ENCODE measurements at regions of chr21 and their contacts with region 1.

Region 1: GRCh38 chr21:44297525-44298290 is 2.1 kb upstream of the PFKL start:
- DNase-seq: peak; percentile 90
- CTCF ChIP-seq: peak; percentile 84

Region 2: DNA sequence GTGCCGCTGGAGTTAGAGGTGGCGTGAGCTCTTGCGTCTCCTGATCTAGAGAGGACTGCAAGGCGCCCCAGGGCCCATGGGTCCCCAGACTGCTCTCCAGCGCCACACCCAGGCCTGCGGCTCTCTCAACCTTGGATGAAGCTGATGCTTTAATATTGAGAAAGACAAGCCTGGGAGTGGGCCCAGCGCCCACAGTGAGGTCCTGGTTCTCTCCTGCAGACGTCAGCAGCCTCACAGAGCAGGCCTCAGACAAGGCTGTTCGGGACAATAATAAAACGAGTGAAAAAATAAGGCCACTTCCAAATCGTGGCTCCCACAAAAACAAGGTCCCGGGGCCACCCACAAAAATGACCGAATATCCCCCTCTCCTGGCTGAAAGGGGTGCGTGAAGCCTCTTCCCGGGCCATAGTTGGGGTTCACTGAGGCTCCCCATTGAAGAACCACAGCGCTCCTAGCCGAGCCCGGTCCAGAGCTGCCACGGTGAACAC is 30.0 kb before region 1 on chr21:
- CTCF ChIA-PET with region 1: interaction called, 19 read pairs
- POLR2A ChIA-PET with region 1: no interaction called
- DNase-seq: no peak
- CTCF ChIP-seq: peak; percentile 35

Region 3: DNA sequence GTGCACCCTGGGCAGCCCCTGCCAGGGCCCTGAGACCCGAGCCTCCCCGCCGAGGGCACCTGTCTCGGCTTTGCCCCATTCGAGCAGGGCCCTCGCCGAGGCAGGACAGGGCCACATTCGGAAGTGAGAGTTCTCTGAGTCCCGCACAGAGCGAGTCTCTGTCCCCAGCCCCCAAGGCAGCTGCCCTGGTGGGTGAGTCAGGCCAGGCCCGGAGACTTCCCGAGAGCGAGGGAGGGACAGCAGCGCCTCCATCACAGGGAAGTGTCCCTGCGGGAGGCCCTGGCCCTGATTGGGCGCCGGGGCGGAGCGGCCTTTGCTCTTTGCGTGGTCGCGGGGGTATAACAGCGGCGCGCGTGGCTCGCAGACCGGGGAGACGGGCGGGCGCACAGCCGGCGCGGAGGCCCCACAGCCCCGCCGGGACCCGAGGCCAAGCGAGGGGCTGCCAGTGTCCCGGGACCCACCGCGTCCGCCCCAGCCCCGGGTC is 12.2 kb before region 1 on chr21 and contains the start of gene AIRE:
- CTCF ChIA-PET with region 1: interaction called, 18 read pairs
- POLR2A ChIA-PET with region 1: no interaction called
- DNase-seq: no peak
- CTCF ChIP-seq: no peak

Region 4: DNA sequence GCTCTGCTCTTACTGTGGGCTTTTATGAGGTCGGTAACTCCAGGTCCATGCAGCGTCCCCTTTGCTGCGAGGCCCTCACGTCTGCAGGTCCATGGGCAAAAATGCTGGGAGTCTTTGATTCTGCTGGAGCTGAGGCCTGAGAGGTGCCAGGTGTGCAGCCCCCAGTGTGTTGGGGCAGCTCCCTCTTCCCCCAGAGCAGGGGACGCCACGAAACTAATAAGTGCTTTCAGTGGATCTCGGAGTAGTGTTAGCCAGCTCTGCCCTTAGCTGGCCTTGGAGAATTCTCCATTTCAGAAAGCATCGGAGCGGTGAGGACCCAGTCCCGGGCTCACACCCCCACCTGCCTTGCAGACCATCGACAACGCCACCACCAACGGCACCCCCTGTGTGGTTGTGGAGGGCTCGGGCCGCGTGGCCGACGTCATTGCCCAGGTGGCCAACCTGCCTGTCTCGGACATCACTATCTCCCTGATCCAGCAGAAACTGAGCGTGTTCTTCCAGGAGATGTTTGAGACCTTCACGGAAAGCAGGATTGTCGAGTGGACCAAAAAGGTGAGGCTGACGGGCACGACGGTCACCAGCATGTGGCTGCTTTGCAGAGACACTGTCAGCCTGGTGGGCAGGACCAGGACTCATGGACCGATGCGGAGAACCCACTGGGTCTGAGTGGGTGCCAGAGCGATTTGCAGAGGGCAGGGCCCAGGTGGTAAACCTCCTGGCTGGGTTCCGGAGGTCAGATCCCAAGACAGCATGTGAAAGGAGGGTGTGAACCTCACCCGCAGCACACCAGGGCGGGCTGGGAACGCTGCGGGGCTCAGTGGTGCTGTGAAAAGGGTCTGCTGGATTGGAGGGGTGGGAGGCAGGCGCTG is 81.2 kb after region 1 on chr21:
- CTCF ChIA-PET with region 1: no interaction called
- POLR2A ChIA-PET with region 1: no interaction called
- DNase-seq: no peak
- CTCF ChIP-seq: no peak

Region 5: DNA sequence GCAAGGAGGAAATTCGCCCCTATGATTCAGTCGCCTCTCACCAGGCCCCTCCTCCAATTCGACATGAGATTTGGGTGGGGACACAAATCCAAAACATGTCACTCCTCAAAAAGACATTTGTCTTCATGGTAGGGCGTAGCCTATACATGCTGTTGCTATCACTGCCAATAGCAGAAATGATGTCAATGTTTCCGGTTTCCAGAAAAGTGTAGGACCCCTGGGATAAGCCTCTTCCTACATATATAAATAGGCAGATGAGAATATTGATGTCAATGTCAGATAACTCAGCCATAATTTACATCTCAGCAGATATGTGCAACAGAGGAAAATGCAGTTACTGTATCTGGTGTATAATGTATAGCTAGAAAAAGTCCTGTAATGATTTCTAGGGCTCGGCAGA is 174.3 kb after region 1 on chr21:
- CTCF ChIA-PET with region 1: no interaction called
- POLR2A ChIA-PET with region 1: no interaction called
- DNase-seq: no peak
- CTCF ChIP-seq: no peak

Measured in GM10248 (cell line).